Mammary epithelial cell (primary cell): ENCODE measurements at regions of chr17 and their contacts with region 1.

Region 1: GRCh38 chr17:63741221-63742049 is at the start of gene STRADA:
- DNase-seq: peak; percentile 99
- H3K4me3 ChIP-seq: peak within 1 kb of the TSS; percentile 71 to 89 (median 80)
- H3K27ac ChIP-seq: peak within 1 kb of the TSS; percentile 85
- H3K4me1 ChIP-seq: peaks cover 18% of the 10 kb centered on the region
- H3K27me3 ChIP-seq: no peaks in the 10 kb centered on the region
- CTCF ChIP-seq: no peak
- total RNA-seq, gene STRADA: 34.3 to 38.9 TPM

Region 2: DNA sequence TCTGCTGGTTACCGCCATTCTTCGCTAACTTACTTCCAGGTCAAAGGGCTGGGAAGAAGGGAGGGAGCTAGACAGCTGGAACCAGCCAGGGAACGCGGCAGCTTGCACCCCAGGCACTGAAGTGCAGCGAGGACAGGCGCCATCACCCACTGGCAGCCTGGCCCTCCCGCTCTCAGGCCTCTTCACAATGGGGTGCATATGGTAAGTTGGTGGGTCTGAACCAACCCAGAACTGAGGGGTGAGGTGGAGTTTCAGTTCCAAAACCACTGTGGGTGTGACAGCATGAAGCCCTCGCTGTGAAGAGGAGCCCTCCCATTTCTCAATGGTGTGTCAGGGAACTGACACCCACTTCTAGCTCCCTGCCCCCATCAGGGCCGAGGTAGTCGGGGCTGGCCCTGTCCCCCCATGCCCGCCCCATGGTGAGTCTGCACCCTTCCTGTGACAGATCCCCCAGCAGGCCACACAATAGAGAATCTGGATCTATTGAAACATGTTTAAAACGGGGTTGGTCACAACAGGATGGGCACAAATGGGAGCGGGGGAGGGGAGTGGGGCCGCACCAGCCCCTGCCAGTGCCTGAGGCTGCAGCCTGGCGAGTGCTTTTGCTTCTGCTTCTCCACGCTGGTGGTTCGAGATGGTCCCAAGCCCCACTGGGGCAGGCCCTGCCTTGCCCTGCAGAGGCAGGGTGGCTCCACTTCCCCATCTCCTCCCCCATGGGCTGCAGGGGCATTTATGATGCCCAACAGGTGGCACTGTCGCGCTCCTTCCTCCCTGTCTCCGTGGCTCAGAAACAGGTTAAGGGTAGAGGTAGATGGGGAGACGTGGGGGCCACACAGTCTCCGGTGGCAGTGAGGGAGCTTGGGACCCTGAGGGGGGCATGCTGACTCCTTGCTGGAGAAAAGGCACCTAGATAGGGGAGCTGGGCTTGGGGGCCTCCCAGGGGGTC is 43.8 kb before region 1 on chr17:
- CTCF ChIA-PET with region 1: no interaction called
- dilution Hi-C with region 1: no loop called
- in situ Hi-C with region 1: no loop called
- intact Hi-C with region 1: loop called (anchors 2 kb)
- DNase-seq: peak; percentile 29
- H3K4me3 ChIP-seq: no peak overlapping the region
- H3K27ac ChIP-seq: no peak overlapping the region
- H3K4me1 ChIP-seq: no peaks in the 10 kb centered on the region
- H3K27me3 ChIP-seq: no peaks in the 10 kb centered on the region
- CTCF ChIP-seq: peak; percentile 51 to 68

Region 3: DNA sequence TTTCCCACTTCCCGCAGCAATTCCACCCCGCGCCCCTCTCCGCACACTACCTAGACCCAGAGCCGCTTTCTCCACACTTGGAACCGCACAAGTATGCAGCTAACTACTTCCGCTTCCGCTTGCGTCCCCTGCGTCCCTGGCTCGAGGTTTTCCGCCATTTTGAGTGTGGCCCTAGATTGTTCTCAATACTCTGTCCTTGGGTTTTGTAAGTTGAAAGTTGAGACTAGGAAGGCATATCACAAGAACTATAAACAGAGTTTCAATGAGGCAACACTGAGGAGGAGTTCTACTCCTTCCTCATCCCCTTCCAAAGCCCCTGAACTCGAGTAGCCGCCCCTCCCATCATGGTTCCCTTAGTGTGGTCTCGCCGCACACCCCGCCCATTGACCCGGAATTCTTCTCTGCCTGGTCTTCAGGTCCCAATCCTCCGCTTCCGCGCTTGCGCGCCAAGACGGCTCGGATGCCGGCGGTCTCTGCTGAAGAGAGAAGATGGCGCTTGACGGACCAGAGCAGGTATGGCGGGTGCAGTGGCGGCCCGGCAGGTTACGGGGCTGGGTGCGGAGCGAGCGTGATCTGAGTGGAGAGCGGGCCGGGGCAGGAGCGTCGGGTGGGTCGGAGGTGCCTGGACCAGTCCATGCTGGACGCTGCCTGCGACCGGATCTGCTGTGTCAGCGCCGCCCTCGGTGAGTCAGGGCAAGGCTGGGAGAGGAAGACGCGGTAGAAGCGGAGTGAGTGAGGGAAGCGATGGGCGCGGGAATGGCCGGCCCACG is 85.8 kb after region 1 on chr17 and contains the starts of genes FTSJ3 and PSMC5:
- CTCF ChIA-PET with region 1: no interaction called
- dilution Hi-C with region 1: no loop called
- in situ Hi-C with region 1: no loop called
- intact Hi-C with region 1: loop called (anchors 1 kb)
- DNase-seq: peak; percentile 95
- H3K4me3 ChIP-seq: peak within 1 kb of the TSS; percentile 68 to 88 (median 83)
- H3K27ac ChIP-seq: peak within 1 kb of the TSS; percentile 83
- H3K4me1 ChIP-seq: peaks cover 18% of the 10 kb centered on the region
- H3K27me3 ChIP-seq: no peaks in the 10 kb centered on the region
- CTCF ChIP-seq: peak; percentile 30 to 51
- total RNA-seq, gene FTSJ3: 39.5 to 49.0 TPM
- total RNA-seq, gene PSMC5: 44.8 to 132 TPM